IMR-90 (cell line): ENCODE measurements at regions of chr5 and their contacts with region 1.

Region 1: GRCh38 chr5:61658592-61659008 is 326.5 kb downstream of the ZSWIM6 start:
- DNase-seq: peak; percentile 65
- ATAC-seq: peak; percentile 75
- H3K4me3 ChIP-seq: no peak overlapping the region
- H3K27ac ChIP-seq: no peak overlapping the region
- H3K4me1 ChIP-seq: no peaks in the 10 kb centered on the region
- H3K27me3 ChIP-seq: peaks cover 31% of the 10 kb centered on the region
- CTCF ChIP-seq: peak; percentile 85
- POLR2A ChIP-seq: no peak
- RAD21 ChIP-seq: peak; percentile 84

Region 2: DNA sequence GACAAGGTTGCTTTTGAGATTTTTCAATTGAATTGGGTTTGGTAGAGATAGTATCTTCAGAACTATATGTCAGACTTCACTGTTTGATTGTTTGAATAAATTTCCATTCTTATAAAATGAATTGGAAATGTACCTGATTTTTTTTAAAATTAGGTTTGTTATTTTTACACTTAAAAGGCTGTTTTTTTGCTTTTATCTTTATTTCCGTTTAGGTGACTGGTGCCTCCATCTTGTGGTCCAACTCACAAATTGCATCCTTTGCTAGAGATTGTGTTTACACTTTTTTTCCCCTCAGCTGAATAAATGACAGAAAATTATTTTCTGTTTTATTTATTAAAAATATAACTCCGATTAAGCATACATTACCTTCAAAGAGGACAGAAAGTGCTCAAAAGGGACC is 698.0 kb before region 1 on chr5:
- CTCF ChIA-PET with region 1: no interaction called
- POLR2A ChIA-PET with region 1: no interaction called
- dilution Hi-C with region 1: no loop called
- in situ Hi-C with region 1: loop called (anchors 25 kb)
- intact Hi-C with region 1: loop called (anchors 5 kb)
- DNase-seq: peak; percentile 46
- ATAC-seq: 0 out of 2 replicates have a peak, but pooled peaks have one; percentile 59
- H3K4me3 ChIP-seq: no peak overlapping the region
- H3K27ac ChIP-seq: no peak overlapping the region
- H3K4me1 ChIP-seq: no peaks in the 10 kb centered on the region
- H3K27me3 ChIP-seq: no peaks in the 10 kb centered on the region
- CTCF ChIP-seq: peak; percentile 62
- POLR2A ChIP-seq: no peak
- RAD21 ChIP-seq: peak; percentile 38

Region 3: DNA sequence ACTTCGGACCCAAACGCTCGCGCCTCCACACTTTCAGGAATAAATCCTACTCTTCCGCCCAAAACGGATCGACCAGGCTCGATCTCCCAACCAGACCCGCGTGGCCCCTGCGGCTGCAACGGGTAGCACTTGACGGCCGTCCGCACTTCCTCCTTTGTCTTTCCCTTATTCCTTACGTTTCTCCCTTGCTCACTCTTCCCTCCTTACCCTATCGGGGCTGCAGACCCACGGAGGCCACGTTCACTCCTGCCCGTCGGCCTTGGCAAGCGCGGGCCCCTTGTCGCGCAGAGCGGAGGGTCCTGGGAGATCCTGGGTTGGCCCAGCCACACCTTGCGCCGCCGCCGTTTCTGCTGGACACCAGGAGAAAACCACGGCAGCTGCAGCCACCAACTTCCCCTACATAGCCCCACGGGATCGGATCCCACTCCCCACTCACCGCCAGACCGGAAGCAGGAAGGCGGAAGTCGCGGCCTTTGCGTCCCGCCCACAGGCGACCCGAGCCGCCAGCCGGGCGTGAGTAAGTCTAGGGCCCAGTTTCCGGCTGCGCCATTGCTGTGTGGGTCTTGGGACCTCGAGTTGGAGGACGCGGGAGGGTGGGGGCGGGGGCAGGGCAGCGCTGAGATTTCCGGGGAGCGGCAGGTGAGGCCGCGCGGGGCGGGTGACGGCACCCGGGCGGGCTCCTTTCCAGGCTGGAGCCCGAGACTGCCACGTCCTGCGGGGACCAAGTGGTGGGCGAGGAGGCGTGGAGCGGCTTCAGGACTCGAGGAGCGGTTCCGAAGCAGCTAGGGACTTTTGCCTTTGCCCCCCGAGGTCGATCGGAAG is 496.4 kb before region 1 on chr5 and contains the start of gene SMIM15:
- CTCF ChIA-PET with region 1: no interaction called
- POLR2A ChIA-PET with region 1: no interaction called
- dilution Hi-C with region 1: no loop called
- in situ Hi-C with region 1: no loop called
- intact Hi-C with region 1: loop called (anchors 5 kb)
- DNase-seq: peak; percentile 87
- ATAC-seq: peak; percentile 95
- H3K4me3 ChIP-seq: peak within 1 kb of the TSS; percentile 94
- H3K27ac ChIP-seq: peak within 1 kb of the TSS; percentile 95
- H3K4me1 ChIP-seq: peaks cover 5% of the 10 kb centered on the region
- H3K27me3 ChIP-seq: no peaks in the 10 kb centered on the region
- CTCF ChIP-seq: no peak
- POLR2A ChIP-seq: peak; percentile 70
- RAD21 ChIP-seq: 0 out of 2 replicates have a peak, but pooled peaks have one; percentile 3
- total RNA-seq, gene SMIM15: 94.3 and 101 TPM in 2 replicates

Region 4: DNA sequence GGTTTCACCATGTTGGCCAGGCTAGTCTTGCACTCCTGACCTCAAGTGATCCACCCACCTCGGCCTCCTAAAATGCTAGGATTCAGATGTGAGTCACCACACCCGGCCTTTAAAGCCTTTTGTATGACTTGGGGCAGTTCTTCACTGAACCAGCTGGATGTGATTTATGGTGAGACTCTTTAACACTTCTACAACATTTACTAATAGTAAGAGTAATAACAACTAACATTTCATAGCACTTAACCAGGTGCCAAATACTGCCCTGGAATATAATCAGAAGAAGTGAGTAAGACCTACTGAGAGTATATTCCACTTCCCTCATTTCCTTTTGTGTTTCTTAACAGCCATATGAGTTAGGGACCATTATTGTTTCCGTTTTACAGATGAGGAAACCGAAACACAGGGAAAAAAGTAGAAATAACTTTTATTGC is 316.5 kb before region 1 on chr5:
- CTCF ChIA-PET with region 1: no interaction called
- POLR2A ChIA-PET with region 1: no interaction called
- dilution Hi-C with region 1: no loop called
- in situ Hi-C with region 1: loop called (anchors 5 kb)
- intact Hi-C with region 1: no loop called
- DNase-seq: peak; percentile 70
- ATAC-seq: peak; percentile 61
- H3K4me3 ChIP-seq: no peak overlapping the region
- H3K27ac ChIP-seq: no peak overlapping the region
- H3K4me1 ChIP-seq: peaks cover 10% of the 10 kb centered on the region
- H3K27me3 ChIP-seq: no peaks in the 10 kb centered on the region
- CTCF ChIP-seq: no peak
- POLR2A ChIP-seq: peak; percentile 20; the same call in 1 of the 2 replicates
- RAD21 ChIP-seq: no peak

Region 5: DNA sequence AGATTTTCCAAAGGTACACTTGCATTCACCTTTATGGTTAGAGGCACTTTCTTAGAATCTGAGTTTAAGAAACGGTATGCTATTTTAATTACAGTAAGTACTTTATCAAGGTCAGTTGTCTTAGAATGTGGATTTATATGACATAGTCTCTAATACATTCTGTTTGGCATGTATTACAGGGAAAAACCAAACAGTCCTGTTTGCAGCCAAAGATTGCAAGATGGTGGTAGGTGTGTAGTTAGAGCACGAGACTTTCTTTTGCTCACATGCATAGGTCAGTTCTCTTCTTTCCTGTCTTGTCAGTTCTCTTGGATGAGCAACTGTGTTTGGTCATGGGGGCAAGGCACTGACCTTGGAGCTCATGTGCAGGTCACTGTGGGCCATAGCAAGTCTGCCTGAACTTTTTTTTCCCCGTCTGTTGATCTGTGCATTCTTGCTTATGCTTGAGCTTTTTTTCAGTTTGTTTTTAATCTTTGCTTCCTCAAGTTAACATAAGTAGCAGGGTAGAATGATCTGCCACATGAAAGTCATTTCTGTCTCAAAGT is 305.9 kb before region 1 on chr5:
- CTCF ChIA-PET with region 1: interaction called, 6 read pairs
- POLR2A ChIA-PET with region 1: no interaction called
- dilution Hi-C with region 1: no loop called
- in situ Hi-C with region 1: no loop called
- intact Hi-C with region 1: loop called (anchors 5 kb)
- DNase-seq: no peak
- ATAC-seq: no peak
- H3K4me3 ChIP-seq: no peak overlapping the region
- H3K27ac ChIP-seq: no peak overlapping the region
- H3K4me1 ChIP-seq: peaks cover 7% of the 10 kb centered on the region
- H3K27me3 ChIP-seq: no peaks in the 10 kb centered on the region
- CTCF ChIP-seq: no peak
- POLR2A ChIP-seq: no peak
- RAD21 ChIP-seq: no peak

Region 6: DNA sequence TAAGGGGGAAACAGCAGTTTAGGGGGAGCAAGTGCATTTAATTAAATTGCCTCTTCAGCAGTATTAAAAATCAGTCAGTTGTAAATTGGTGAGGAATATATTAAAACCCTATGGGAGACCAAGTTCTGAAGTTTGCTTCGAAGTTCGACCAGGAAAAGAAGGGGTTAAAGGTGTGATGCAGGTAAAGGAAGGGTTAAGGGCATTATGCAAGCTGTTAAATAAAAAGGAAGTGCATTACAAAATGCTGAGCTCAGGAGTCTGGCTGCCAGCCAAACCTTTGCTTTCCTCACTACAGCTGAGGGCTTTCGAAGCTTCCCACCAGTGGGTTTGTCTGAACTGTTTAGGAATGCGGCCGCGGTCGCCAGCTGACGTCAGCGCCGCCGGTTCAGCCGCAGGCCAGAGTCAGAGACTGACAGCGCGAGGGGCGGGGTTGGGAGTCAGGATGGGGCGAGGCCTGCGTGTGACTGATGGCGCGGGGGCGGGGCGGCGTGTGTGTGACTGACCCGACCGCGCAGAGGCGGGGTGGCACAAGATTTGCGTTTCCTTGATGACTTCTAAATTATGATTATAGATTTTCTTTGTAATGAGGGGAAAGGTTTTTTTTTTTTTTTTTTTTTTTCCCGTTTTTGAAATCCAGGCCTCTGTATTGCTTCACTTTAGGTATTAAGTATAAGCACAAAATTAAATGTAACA is 250.0 kb before region 1 on chr5:
- CTCF ChIA-PET with region 1: no interaction called
- POLR2A ChIA-PET with region 1: no interaction called
- dilution Hi-C with region 1: no loop called
- in situ Hi-C with region 1: no loop called
- intact Hi-C with region 1: loop called (anchors 5 kb)
- DNase-seq: peak; percentile 99
- ATAC-seq: peak; percentile 97
- H3K4me3 ChIP-seq: no peak overlapping the region
- H3K27ac ChIP-seq: peak overlapping the region; percentile 38; the same call in 1 of the 2 replicates
- H3K4me1 ChIP-seq: peaks cover 20% of the 10 kb centered on the region
- H3K27me3 ChIP-seq: no peaks in the 10 kb centered on the region
- CTCF ChIP-seq: no peak
- POLR2A ChIP-seq: no peak
- RAD21 ChIP-seq: no peak

Region 7: DNA sequence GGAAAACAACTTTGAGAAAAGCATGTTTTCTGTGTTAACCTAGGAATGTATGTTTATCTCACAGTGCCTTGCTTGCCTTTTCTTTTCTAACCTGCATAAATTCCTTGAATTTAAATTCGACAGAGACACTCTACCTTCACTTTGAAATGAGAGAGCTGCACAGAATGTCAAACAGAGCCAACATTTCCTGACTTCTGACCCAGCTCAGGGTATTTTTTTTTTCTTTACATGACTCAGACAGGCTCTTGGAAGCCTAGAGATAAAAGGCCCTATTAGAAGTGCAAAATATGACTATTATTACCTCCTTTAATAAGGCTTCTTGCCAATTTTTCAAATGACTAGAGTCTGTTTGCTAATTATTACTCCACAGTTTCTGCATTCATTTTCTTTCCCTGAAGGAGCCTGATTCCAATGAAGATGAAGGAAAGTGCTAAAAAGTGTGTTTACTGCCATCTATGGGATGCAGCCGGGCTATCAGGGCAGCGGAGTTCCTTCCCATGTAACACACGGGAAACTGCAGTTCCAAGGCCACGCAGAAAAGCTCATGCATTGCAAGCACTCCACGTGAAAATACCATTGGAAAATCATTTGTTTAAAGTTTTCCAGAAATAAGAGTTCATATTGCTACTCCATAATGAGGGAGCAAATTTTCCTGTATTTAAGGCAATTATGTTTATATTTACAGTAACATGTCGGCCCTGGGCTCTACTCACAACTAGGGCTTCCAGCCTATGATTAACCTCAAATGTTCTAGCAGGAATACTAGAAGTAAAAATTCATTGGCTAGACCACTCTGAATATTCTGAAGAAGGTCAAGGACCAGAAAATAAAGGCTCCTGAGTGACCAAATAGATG is 159.1 kb after region 1 on chr5:
- CTCF ChIA-PET with region 1: interaction called, 3 read pairs
- POLR2A ChIA-PET with region 1: no interaction called
- dilution Hi-C with region 1: no loop called
- in situ Hi-C with region 1: no loop called
- intact Hi-C with region 1: loop called (anchors 5 kb)
- DNase-seq: peak; percentile 39
- ATAC-seq: peak; percentile 94
- H3K4me3 ChIP-seq: no peak overlapping the region
- H3K27ac ChIP-seq: no peak overlapping the region
- H3K4me1 ChIP-seq: no peaks in the 10 kb centered on the region
- H3K27me3 ChIP-seq: peaks cover 2% of the 10 kb centered on the region
- CTCF ChIP-seq: peak; percentile 57
- POLR2A ChIP-seq: no peak
- RAD21 ChIP-seq: peak; percentile 52